ENCODE measurements at regions of chr12 and their contacts with region 1.

Region 1: GRCh38 chr12:93569656-93570551 is 2.6 kb upstream of the SOCS2 start:
- DNase-seq: peak; percentile 71 to 73
- ATAC-seq: peak; percentile 77 to 81
- H3K4me3 ChIP-seq: peak overlapping the region; percentile 77 to 96 (median 85)
- H3K27ac ChIP-seq: peak overlapping the region; percentile 76 to 89 (median 83)
- H3K4me1 ChIP-seq: peaks cover 5 to 28% of the 10 kb centered on the region in 2 donors
- H3K27me3 ChIP-seq: peaks cover 11 to 28% (median 18%) of the 10 kb centered on the region in 3 donors
- CTCF ChIP-seq: peak; percentile 74 to 92 (median 82)
- POLR2A ChIP-seq: no peak

Region 2: GRCh38 chr12:93591137-93591868 is 21.4 kb after region 1 on chr12:
- in situ Hi-C with region 1: no loop called
- intact Hi-C with region 1: loop called (anchors 2 kb)
- DNase-seq: peak; percentile 33 to 67
- ATAC-seq: peak; percentile 74 to 79
- H3K4me3 ChIP-seq: peak overlapping the region; percentile 56 to 80 (median 70)
- H3K27ac ChIP-seq: peak overlapping the region; percentile 65 to 77 (median 72)
- H3K4me1 ChIP-seq: peaks cover 0 to 10% of the 10 kb centered on the region in 2 donors
- H3K27me3 ChIP-seq: peaks cover 0 to 5% (median 0%) of the 10 kb centered on the region in 3 donors
- CTCF ChIP-seq: peak in 1 of 5 experiments; percentile 7
- POLR2A ChIP-seq: peak in 1 of 2 donors; percentile 68

Region 3: GRCh38 chr12:93742110-93742934 is 172.4 kb after region 1 on chr12:
- in situ Hi-C with region 1: loop called in 3 of 4 experiments (anchors 10 to 25 kb)
- intact Hi-C with region 1: loop called (anchors 1 kb)
- DNase-seq: peak in 1 of 2 donors; percentile 52
- ATAC-seq: peak; percentile 75 to 84
- H3K4me3 ChIP-seq: peak overlapping the region; percentile 57 to 69 (median 61)
- H3K27ac ChIP-seq: peak overlapping the region; percentile 75 to 84 (median 76)
- H3K4me1 ChIP-seq: peaks cover 39 to 66% of the 10 kb centered on the region in 2 donors
- H3K27me3 ChIP-seq: no peaks in the 10 kb centered on the region
- CTCF ChIP-seq: peak; percentile 29 to 58 (median 49)
- POLR2A ChIP-seq: no peak

Region 4: GRCh38 chr12:93979189-93979588 is 409.3 kb after region 1 on chr12:
- in situ Hi-C with region 1: loop called in 3 of 4 experiments (anchors 10 to 25 kb)
- intact Hi-C with region 1: loop called (anchors 2 kb)
- DNase-seq: no peak
- ATAC-seq: no peak
- H3K4me3 ChIP-seq: no peak overlapping the region
- H3K27ac ChIP-seq: peak overlapping the region in 1 of 4 donors; percentile 15
- H3K4me1 ChIP-seq: peaks cover 4 to 13% of the 10 kb centered on the region in 2 donors
- H3K27me3 ChIP-seq: no peaks in the 10 kb centered on the region
- CTCF ChIP-seq: peak in 4 of 5 experiments; percentile 35 to 48 (median 42)
- POLR2A ChIP-seq: no peak

Measured in gastrocnemius medialis (tissue), 4 donors.